Cardiac septum (tissue), 1 donor: ENCODE measurements at regions of chr2 and their contacts with region 1.

Region 1: DNA sequence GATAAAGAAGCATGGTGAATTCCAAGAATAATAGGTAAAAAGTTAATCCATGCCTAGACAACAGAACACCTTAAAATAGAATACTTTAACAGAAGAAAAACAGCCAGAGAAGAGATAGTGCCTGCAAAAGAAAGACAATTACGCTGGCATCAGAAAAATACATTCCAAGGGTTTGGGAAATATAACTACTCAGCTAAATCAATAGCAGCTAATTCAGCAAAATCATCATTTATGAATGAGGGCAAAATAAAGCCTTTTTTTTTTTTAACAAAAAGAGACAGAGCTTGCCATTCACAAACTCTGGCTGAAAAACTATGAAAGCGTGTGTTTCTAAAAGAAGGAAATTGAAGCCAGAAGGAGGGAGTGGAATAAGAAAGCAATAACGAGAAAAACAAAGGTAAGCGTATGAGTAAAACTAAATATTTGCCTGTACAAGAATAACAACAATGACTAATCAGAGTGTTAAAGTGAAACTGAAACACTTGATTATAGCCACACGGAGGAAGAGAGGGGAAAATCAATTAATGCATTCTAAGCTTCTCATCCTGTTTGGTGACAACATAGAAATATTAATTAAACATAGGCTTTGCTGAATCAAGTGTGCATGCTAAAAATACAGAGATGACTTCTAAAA is 90.2 kb downstream of the EHD3 start:
- DNase-seq: no peak

Region 2: DNA sequence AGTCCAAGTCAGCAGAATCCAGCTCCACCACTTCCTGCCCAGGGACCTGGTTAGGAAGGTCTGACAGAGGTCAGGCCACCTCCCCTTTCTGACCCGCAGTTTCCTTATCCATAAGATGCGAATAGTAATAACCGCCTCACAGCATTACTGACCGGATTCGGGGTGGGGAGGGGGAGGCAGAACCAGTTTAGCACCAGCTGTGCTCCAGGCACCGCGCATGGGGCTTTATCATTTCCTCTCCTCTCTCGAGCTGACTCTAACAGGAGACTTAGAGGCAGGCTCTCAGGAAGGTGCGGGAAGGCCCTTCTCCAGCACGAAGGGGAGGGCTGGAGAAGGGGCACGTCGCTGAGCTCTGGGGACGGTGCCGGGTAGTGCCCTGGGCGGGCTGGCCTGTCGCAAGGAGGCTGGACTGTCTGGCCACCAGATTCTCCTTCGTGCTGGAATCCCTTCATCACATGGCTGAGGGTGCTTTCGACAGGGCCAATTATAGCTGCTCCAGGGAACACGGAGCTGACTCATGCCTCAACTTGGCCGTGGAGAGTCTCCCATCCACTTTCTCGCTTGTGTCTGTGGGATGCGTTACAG is 84.4 kb before region 1 on chr2:
- intact Hi-C with region 1: loop called (anchors 2 kb)
- DNase-seq: peak; percentile 92

Region 3: DNA sequence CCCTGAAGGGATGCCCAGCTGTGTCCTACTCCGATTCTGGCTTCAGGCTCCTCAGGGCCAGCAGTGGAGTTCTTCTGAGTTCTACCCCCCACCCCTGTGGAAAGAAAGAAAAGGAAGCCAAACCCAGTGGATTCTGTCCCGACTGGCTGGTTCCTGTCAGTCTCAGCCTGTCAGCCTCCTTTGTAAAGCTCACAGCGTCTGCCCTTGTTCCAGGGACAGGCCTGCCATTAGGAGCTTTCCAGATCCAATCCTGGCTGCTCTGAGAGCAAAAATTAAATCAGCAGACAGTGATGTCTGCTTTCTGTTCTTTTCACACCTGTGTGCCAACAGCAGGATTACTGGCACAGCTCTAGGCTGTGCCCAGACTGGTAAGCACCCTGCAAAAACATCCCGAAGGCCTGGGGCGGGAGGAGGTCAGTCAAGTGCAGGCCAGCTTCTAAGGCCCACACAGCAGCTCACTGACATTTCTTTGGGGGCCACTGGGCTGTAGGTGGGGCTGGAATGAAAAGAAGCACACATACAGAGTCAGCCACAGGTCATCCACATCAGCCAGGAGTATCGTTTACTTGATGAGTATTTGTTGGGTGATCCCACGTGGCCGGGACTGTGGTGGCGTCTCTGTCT is 21.1 kb before region 1 on chr2:
- intact Hi-C with region 1: loop called (anchors 1 kb)
- DNase-seq: peak; percentile 80

Region 4: GRCh38 chr2:31526946-31527732 is 203.0 kb after region 1 on chr2:
- intact Hi-C with region 1: no loop called
- DNase-seq: no peak